HEK293T (cell line): ENCODE measurements at regions of chr2 and their contacts with region 1.

Region 1: GRCh38 chr2:112645310-112646101 is at the start of gene SLC20A1:
- DNase-seq: peak; percentile 98

Region 2: GRCh38 chr2:112626604-112627059 is 18.9 kb before region 1 on chr2:
- CTCF ChIA-PET with region 1: interaction called, 11 read pairs
- POLR2A ChIA-PET with region 1: interaction called, 29 read pairs
- DNase-seq: peak; percentile 68

Region 3: GRCh38 chr2:112634153-112634873 is 11.2 kb before region 1 on chr2:
- CTCF ChIA-PET with region 1: interaction called, 11 read pairs
- POLR2A ChIA-PET with region 1: interaction called, 29 read pairs
- DNase-seq: no peak